ENCODE measurements at regions of chr2 and their contacts with region 1.

Region 1: GRCh38 chr2:209208211-209208610 is 215.6 kb upstream of the MAP2 start:
- DNase-seq: peak; percentile 41
- ATAC-seq: peak; percentile 77
- H3K4me3 ChIP-seq: 0 out of 4 replicates have a peak overlapping the region, but pooled peaks of 1 of the 2 experiments have one; percentile 18
- H3K27ac ChIP-seq: no peak overlapping the region
- H3K4me1 ChIP-seq: no peaks in the 10 kb centered on the region
- H3K27me3 ChIP-seq: no peaks in the 10 kb centered on the region
- CTCF ChIP-seq: peak; percentile 64 to 86 (median 69)
- POLR2A ChIP-seq: no peak
- RAD21 ChIP-seq: peak; percentile 85

Region 2: DNA sequence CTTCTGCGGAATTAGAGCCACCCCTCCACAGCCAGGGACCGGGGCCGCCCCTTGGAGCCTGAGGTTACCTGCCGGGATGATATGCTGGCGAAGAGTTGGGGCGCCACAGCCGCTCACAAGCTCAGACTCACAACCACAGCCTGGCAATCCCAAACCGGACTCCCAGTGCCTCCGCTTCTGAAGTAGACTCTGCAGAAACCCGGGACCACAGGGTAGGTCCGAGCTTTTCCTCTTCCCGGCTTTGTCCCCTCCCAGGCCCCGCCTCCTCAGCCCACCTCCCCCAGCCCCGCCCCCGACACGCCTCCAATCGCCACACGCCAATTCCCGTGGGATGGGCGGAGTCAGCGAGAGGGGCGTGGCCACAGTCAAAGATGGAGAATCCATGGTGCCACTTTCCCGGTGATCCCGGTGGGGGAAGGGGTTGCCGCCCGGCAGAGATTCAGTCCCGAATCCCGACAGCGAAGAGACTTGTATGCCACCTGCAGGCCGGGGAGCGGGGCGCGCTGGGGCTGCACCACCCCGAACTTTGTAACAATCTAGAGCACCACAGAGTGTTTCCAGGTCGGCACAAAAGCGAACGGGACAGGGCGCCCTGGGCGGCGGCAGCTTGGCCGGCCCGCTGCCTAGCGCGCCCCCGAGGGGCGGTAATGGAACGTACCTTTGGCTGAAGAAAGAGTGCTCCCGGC is 953.2 kb before region 1 on chr2 and contains the start of gene IDH1:
- CTCF ChIA-PET with region 1: no interaction called
- POLR2A ChIA-PET with region 1: no interaction called
- RAD21 ChIA-PET with region 1: no interaction called
- intact Hi-C with region 1: loop called (anchors 2 kb)
- DNase-seq: peak; percentile 87
- ATAC-seq: peak; percentile 79
- H3K4me3 ChIP-seq: peak within 1 kb of the TSS; percentile 79 to 80
- H3K27ac ChIP-seq: peak within 1 kb of the TSS; percentile 73
- H3K4me1 ChIP-seq: peaks cover 10 to 20% of the 10 kb centered on the region in 2 experiments; a peak in 3 of 4 replicates
- H3K27me3 ChIP-seq: no peaks in the 10 kb centered on the region
- CTCF ChIP-seq: peak; percentile 60 to 64 (median 62); a peak in 5 of 6 replicates
- POLR2A ChIP-seq: no peak
- RAD21 ChIP-seq: peak; percentile 61
- total RNA-seq, gene IDH1: 91.2 TPM

Region 3: GRCh38 chr2:208392300-208393080 is 815.7 kb before region 1 on chr2:
- CTCF ChIA-PET with region 1: interaction called, 3 read pairs
- POLR2A ChIA-PET with region 1: no interaction called
- RAD21 ChIA-PET with region 1: no interaction called
- intact Hi-C with region 1: loop called (anchors 1 kb)
- DNase-seq: no peak
- ATAC-seq: peak; percentile 59
- H3K4me3 ChIP-seq: no peak overlapping the region
- H3K27ac ChIP-seq: no peak overlapping the region
- H3K4me1 ChIP-seq: no peaks in the 10 kb centered on the region
- H3K27me3 ChIP-seq: no peaks in the 10 kb centered on the region
- CTCF ChIP-seq: peak in 2 of 3 experiments; percentile 39; a peak in 3 of 6 replicates
- POLR2A ChIP-seq: no peak
- RAD21 ChIP-seq: peak; percentile 19; the same call in 1 of the 2 replicates

Region 4: GRCh38 chr2:208466151-208466919 is 741.9 kb before region 1 on chr2:
- CTCF ChIA-PET with region 1: interaction called, 7 read pairs
- POLR2A ChIA-PET with region 1: no interaction called
- RAD21 ChIA-PET with region 1: no interaction called
- intact Hi-C with region 1: loop called (anchors 1 kb)
- DNase-seq: peak; percentile 44
- ATAC-seq: peak; percentile 90
- H3K4me3 ChIP-seq: no peak overlapping the region
- H3K27ac ChIP-seq: no peak overlapping the region
- H3K4me1 ChIP-seq: no peaks in the 10 kb centered on the region
- H3K27me3 ChIP-seq: no peaks in the 10 kb centered on the region
- CTCF ChIP-seq: peak; percentile 58 to 79 (median 74)
- POLR2A ChIP-seq: no peak
- RAD21 ChIP-seq: peak; percentile 83

Region 5: DNA sequence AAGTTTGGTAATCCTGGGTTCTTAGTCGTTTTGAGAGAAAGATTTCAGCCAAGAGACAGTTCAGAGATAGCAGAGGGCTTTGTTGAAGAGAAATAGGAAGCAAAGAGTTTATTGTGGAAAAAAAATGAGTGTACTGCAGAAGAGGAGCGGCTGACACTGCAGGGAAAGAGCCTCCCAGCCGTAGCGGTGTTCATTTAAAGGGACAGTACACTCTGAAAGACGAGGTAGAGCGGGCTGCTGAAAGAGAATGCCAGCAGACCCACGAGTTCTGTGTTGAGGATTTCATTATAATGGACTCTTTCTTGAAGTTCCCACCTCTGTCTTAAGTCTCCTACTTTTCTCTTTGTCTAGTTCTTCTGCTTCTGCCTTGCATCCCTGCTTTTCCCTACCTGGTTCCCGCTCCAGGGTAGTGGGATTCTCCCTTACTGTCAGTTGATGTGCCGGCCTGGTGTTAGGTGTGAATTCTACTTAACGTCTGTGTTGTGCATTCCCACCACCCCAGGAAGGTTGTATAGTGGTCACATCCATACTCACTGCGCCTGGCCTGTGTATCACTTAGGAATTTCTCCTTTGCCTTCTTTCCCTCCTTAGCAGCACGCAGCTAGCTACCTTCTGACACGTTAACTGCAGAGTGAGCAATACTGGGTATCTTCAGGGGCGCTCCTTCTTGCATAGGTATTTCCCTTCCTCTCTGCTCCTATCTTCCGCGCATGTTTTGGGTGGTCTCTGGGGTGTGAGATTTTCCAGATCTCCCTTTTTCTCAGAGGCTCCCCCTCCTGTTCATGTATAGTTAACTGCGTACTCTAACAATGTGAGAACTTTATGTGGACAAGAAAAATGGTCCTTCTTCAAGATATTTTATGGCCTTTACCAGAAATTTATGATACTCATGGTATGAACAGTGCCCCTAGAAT is 637.1 kb before region 1 on chr2:
- CTCF ChIA-PET with region 1: no interaction called
- POLR2A ChIA-PET with region 1: no interaction called
- RAD21 ChIA-PET with region 1: no interaction called
- intact Hi-C with region 1: loop called (anchors 5 kb)
- DNase-seq: no peak
- ATAC-seq: peak; percentile 87
- H3K4me3 ChIP-seq: peak overlapping the region; percentile 19 to 35
- H3K27ac ChIP-seq: no peak overlapping the region
- H3K4me1 ChIP-seq: peaks cover 3 to 4% of the 10 kb centered on the region in 2 experiments; a peak in 2 of 4 replicates
- H3K27me3 ChIP-seq: peaks cover 15% of the 10 kb centered on the region; the same call in 1 of the 2 replicates
- CTCF ChIP-seq: peak; percentile 4 to 50 (median 41); a peak in 4 of 6 replicates
- POLR2A ChIP-seq: no peak
- RAD21 ChIP-seq: no peak

Region 6: DNA sequence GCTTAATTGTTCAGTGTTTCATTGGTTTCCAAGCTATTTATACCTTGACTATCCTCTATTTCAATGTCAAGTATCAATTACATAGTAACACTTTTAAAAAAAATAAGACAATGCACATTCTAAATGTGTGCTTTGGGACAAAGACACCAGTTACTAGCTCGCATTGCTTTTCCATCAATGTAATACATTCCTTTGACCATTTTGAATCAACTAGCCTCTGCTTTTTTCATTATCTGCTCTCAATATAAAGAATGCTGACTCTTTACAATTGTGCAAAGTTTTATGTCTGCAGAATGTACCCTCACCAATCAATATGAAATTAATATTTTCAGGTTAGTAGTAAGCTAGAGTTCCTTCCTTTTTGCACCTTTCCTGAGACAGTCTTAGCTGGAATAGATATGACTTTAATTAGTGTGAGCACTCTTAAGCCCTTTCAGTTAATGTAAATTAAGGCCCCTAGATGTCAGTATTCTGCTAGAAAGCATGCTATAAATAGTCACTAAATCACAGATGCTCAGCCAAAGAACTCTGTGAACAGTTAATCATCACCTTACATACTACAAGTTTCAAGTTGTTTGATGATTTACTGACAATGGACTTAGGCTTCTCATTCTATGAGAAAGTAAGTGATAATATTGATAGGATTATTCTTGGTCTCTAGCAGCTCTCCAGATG is 388.1 kb before region 1 on chr2:
- CTCF ChIA-PET with region 1: interaction called, 10 read pairs
- POLR2A ChIA-PET with region 1: no interaction called
- RAD21 ChIA-PET with region 1: no interaction called
- intact Hi-C with region 1: loop called (anchors 1 kb)
- DNase-seq: peak; percentile 4
- ATAC-seq: peak; percentile 69
- H3K4me3 ChIP-seq: no peak overlapping the region
- H3K27ac ChIP-seq: no peak overlapping the region
- H3K4me1 ChIP-seq: no peaks in the 10 kb centered on the region
- H3K27me3 ChIP-seq: 0 out of 2 replicates have a peak, but pooled peaks cover 3% of the 10 kb centered on the region
- CTCF ChIP-seq: peak; percentile 32 to 50 (median 37); a peak in 3 of 6 replicates
- POLR2A ChIP-seq: no peak
- RAD21 ChIP-seq: peak; percentile 58

Region 7: GRCh38 chr2:209411718-209412117 is 203.5 kb after region 1 on chr2:
- CTCF ChIA-PET with region 1: no interaction called
- POLR2A ChIA-PET with region 1: no interaction called
- RAD21 ChIA-PET with region 1: no interaction called
- intact Hi-C with region 1: no loop called
- DNase-seq: no peak
- ATAC-seq: no peak
- H3K4me3 ChIP-seq: no peak overlapping the region
- H3K27ac ChIP-seq: no peak overlapping the region
- H3K4me1 ChIP-seq: no peaks in the 10 kb centered on the region
- H3K27me3 ChIP-seq: no peaks in the 10 kb centered on the region
- CTCF ChIP-seq: no peak
- POLR2A ChIP-seq: no peak
- RAD21 ChIP-seq: no peak

Measured in HCT116 (cell line).